Gastrocnemius medialis (tissue), 4 donors: ENCODE measurements at regions of chr9 and their contacts with region 1.

Region 1: GRCh38 chr9:128412120-128412790 is 8.4 kb upstream of the CERCAM start:
- DNase-seq: no peak
- ATAC-seq: peak in 1 of 2 donors; percentile 19
- H3K4me3 ChIP-seq: no peak overlapping the region
- H3K27ac ChIP-seq: no peak overlapping the region
- H3K4me1 ChIP-seq: no peaks in the 10 kb centered on the region
- H3K27me3 ChIP-seq: peaks cover 13 to 30% (median 27%) of the 10 kb centered on the region in 3 donors
- CTCF ChIP-seq: peak; percentile 29 to 65 (median 57)
- POLR2A ChIP-seq: no peak

Region 2: GRCh38 chr9:128296337-128297220 is 115.7 kb before region 1 on chr9:
- in situ Hi-C with region 1: loop called in 1 of 4 experiments (anchors 10 kb)
- intact Hi-C with region 1: no loop called
- DNase-seq: no peak
- ATAC-seq: no peak
- H3K4me3 ChIP-seq: no peak overlapping the region
- H3K27ac ChIP-seq: no peak overlapping the region
- H3K4me1 ChIP-seq: no peaks in the 10 kb centered on the region
- H3K27me3 ChIP-seq: no peaks in the 10 kb centered on the region
- CTCF ChIP-seq: no peak
- POLR2A ChIP-seq: no peak

Region 3: GRCh38 chr9:128361986-128362646 is 50.1 kb before region 1 on chr9:
- in situ Hi-C with region 1: loop called in 2 of 4 experiments (anchors 5 to 10 kb)
- intact Hi-C with region 1: loop called (anchors 1 kb)
- DNase-seq: peak; percentile 72 to 80
- ATAC-seq: peak; percentile 96 to 98
- H3K4me3 ChIP-seq: peak overlapping the region; percentile 42 to 53 (median 47)
- H3K27ac ChIP-seq: peak overlapping the region; percentile 19 to 57 (median 46)
- H3K4me1 ChIP-seq: peaks cover 15 to 19% of the 10 kb centered on the region in 2 donors
- H3K27me3 ChIP-seq: no peaks in the 10 kb centered on the region
- CTCF ChIP-seq: peak; percentile 79 to 87 (median 85)
- POLR2A ChIP-seq: no peak

Region 4: DNA sequence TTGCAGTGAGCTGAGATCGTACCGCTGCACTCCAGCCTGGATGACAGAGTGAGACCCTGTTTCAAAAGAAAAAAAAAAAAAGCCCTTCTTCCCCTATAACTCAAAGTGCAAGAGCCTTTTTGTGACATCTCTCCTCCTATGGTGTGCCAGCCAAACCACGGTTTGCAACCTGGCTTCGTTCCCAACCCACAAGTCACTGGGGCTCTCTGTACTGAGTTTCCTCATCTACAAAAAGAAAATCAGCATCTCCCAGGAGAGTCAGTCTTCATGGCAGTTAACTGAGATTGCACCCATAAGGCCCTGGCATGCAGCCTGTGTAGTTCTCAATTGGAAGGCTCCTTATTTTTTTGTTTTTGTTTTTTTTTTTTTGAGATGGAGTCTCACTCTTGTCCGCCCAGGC is 58.3 kb after region 1 on chr9:
- in situ Hi-C with region 1: no loop called
- intact Hi-C with region 1: no loop called
- DNase-seq: peak in 1 of 2 donors; percentile 19
- ATAC-seq: no peak
- H3K4me3 ChIP-seq: no peak overlapping the region
- H3K27ac ChIP-seq: no peak overlapping the region
- H3K4me1 ChIP-seq: no peaks in the 10 kb centered on the region
- H3K27me3 ChIP-seq: no peaks in the 10 kb centered on the region
- CTCF ChIP-seq: no peak
- POLR2A ChIP-seq: no peak